ENCODE measurements at regions of chr3 and their contacts with region 1.

Region 1: DNA sequence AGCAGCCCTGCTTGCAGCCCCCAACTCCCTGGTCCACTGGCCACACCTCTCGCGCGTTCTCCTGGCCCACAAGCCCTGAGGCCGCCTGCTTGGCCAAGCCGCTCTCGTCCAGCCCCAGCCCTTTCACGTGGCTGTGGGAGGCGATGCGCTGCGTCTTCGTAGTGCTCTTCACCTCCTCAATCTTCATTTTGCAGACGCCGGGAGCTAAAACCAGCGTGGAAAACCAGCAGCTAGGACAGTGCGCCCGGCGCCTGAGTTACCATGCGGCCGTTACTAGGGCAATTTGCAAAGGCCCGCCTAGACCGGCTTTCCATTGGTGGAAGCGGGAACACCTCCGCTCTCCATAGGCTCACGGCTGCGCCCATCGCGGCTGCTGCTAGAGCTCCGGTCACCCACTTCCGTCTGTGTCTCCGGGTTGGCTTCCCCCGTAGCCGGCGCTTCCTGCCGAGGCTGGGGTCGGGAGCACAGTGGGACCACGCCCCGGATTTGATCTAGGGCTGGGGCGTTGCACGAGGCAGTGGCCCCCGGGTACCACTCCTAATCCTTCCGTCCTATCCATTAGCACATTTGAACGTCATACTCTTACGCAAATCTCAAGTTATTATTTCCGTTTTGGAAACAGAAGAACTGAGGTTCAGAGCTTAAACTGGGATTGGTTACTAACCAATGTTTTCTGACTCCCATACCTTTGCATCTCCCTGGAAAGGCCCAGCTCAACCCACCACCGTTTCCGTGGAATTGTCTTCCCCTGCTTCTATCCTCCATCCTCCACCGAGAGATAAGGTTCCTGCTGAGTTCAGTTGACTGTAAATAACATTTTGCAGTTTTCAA is at the start of gene RUVBL1:
- DNase-seq: peak; percentile 98
- H3K4me3 ChIP-seq: peak within 1 kb of the TSS; percentile 98
- H3K27ac ChIP-seq: peak within 1 kb of the TSS; percentile 56
- H3K4me1 ChIP-seq: peaks cover 16% of the 10 kb centered on the region
- CTCF ChIP-seq: no peak
- total RNA-seq, gene RUVBL1: 103 and 116 TPM in 2 replicates

Region 2: DNA sequence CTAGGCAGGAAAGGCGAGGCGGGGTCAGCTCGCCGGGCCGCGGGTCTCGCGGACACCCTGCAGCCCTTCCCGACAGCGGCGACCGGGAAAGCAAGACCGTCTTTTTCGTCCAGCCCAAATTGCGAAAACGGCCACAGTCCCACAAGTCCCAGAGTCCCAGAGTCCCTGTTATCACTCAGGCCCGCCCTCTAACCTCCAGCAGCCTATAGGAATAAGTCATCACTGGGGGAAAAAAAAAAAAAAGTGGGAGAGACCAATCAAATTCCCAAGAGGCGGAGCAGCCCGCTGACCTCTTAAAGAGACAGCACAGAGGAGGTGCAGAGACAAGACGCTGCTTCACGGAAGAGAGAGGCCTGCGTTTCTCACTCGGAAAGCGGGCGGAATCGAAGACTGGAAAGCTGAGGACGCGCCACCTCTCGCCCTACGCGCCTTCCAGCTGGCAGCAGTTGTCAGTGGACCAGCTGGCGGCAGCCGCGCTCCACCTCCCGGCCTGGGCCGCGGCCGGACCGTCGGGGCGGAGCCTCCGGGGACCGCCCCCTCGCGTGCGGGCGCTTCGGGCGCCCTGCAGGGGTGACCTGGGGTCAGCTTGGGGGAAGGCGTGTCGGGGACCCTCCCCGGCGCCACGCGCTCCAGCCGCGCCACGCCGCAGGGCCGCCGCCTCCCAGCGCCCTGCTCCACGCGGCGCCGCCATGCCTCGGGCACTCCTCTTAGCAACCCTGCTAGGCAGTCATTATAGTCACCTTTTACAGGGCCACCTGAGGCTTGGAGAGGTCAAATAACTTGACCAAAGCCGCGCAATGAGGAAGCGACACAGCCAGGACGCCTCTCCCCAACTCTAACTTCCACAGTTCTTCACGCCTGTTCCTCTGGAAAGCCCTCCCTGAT is 532.9 kb before region 1 on chr3 and contains the start of gene TPRA1:
- CTCF ChIA-PET with region 1: no interaction called
- POLR2A ChIA-PET with region 1: no interaction called
- intact Hi-C with region 1: loop called (anchors 2 kb)
- DNase-seq: peak; percentile 98
- H3K4me3 ChIP-seq: peak within 1 kb of the TSS; percentile 85
- H3K27ac ChIP-seq: peak within 1 kb of the TSS; percentile 83
- H3K4me1 ChIP-seq: peaks cover 43% of the 10 kb centered on the region
- CTCF ChIP-seq: peak; percentile 57
- total RNA-seq, gene TPRA1: 25.6 and 32.3 TPM in 2 replicates

Region 3: GRCh38 chr3:127959846-127960245 is 163.9 kb before region 1 on chr3:
- CTCF ChIA-PET with region 1: no interaction called
- POLR2A ChIA-PET with region 1: no interaction called
- intact Hi-C with region 1: no loop called
- DNase-seq: no peak
- H3K4me3 ChIP-seq: no peak overlapping the region
- H3K27ac ChIP-seq: no peak overlapping the region
- H3K4me1 ChIP-seq: no peaks in the 10 kb centered on the region
- CTCF ChIP-seq: peak; percentile 52

Region 4: DNA sequence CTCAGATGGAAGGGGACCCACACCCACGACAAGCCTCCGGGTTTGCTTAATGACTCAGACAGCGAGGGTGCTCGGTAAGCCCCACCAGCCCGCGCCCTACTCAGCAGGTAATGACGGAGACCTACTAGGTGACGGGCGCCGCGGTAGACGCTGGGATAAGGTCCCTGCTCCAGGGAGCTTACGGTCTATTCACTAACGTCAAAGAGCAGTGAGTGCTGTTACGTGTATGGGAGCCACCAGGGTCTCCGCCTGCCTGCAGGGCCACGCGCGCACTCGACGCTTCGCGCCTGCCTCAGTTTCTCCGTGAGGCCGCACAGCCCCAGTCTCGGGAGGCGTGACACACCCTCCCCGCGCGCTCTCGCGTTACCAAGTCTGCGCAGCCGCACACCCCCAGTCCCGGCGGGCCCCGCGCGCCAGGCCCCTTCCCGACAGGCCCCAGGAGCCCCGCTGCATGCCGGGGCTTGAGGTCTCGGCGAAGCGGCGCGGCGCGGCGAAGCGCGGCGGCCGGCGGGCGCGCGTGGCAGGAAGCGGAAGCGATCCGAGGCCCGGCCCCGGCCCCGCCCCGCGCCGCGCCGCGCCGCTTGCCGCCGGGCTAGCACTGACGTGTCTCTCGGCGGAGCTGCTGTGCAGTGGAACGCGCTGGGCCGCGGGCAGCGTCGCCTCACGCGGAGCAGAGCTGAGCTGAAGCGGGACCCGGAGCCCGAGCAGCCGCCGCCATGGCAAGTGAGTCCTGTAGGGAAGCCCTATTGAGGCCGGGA is 71.7 kb before region 1 on chr3 and contains the start of gene SEC61A1:
- CTCF ChIA-PET with region 1: no interaction called
- POLR2A ChIA-PET with region 1: no interaction called
- intact Hi-C with region 1: loop called (anchors 5 kb)
- DNase-seq: peak; percentile 96
- H3K4me3 ChIP-seq: peak within 1 kb of the TSS; percentile 88
- H3K27ac ChIP-seq: peak within 1 kb of the TSS; percentile 57
- H3K4me1 ChIP-seq: peaks cover 31% of the 10 kb centered on the region
- CTCF ChIP-seq: no peak
- total RNA-seq, gene SEC61A1: 72.9 and 85.2 TPM in 2 replicates

Region 5: GRCh38 chr3:128112357-128112968 is 11.3 kb before region 1 on chr3:
- CTCF ChIA-PET with region 1: interaction called, 3 read pairs
- POLR2A ChIA-PET with region 1: interaction called, 12 read pairs
- intact Hi-C with region 1: no loop called
- DNase-seq: peak; percentile 30
- H3K4me3 ChIP-seq: no peak overlapping the region
- H3K27ac ChIP-seq: no peak overlapping the region
- H3K4me1 ChIP-seq: peaks cover 33% of the 10 kb centered on the region
- CTCF ChIP-seq: no peak

Region 6: GRCh38 chr3:128153156-128154041 is 29.6 kb after region 1 on chr3 and contains the start of gene EEFSEC:
- CTCF ChIA-PET with region 1: no interaction called
- POLR2A ChIA-PET with region 1: interaction called, 19 read pairs
- intact Hi-C with region 1: loop called (anchors 1 kb)
- DNase-seq: peak; percentile 90
- H3K4me3 ChIP-seq: peak within 1 kb of the TSS; percentile 92
- H3K27ac ChIP-seq: peak within 1 kb of the TSS; percentile 62
- H3K4me1 ChIP-seq: peaks cover 8% of the 10 kb centered on the region
- CTCF ChIP-seq: 0 out of 2 replicates have a peak, but pooled peaks have one; percentile 23
- total RNA-seq, gene EEFSEC: 14.8 and 17.7 TPM in 2 replicates

Region 7: DNA sequence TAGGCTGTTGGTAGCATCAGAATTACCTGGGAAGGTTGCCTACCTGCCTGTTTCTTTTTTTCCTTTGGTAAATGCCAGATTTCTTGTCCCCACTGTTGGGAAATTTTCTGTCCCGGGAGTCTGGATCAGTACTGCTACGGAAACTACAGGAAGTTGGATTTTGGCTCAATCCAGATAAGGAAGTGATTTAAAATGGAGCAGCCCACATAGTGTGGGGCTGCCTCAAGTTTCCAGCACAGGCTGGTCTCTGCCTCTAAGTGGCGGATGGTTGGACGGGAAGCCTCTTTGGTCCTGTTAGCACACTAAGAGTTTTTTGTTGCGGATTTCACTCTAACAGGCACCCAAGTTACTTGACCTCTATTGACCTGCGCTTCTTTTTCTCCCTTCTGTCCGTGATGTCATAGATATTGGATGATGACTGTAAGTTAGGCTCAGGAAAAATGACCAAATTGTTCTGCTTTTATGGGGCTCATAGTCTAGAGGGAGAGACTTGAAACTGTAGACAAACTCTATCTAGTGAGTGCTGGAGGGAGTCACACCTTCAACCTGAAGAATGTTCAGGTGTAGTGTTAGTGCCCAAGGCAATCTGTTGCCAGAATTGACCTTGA is 84.3 kb after region 1 on chr3:
- CTCF ChIA-PET with region 1: no interaction called
- POLR2A ChIA-PET with region 1: no interaction called
- intact Hi-C with region 1: no loop called
- DNase-seq: no peak
- H3K4me3 ChIP-seq: no peak overlapping the region
- H3K27ac ChIP-seq: no peak overlapping the region
- H3K4me1 ChIP-seq: no peaks in the 10 kb centered on the region
- CTCF ChIP-seq: no peak

Measured in OCI-LY7 (cell line).